ENCODE measurements at regions of chr5 and their contacts with region 1.

Region 1: DNA sequence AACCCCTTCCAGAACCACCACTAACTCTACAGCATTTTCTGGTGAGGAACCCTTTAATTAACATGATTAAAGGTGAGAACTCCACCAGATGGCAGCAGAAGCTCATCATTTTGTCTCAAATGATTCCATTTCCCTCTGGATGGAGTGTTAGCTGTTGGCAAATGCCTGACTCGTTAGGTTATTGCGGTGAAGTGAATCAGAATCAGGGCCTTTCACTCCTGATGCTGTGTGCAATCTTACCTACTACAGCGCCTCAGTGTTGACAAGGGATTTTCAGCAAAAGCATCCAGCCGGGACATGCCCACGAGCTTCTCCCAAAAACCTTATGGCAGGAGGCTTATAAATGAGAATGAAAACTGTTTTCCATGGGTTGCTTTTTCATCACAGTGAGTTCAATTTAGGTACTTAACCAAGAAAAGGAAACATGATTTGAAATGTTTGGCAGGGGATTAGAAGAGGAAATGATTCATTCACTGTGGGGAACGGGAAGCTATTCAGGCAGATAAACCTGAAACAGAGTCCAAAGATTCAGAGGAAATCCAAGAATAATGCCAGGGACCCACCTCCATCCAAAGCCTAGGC is 48.0 kb upstream of the CAST start:
- DNase-seq: peak; percentile 64
- H3K4me3 ChIP-seq: peak overlapping the region; percentile 10 to 58; a peak in 2 of 4 replicates
- H3K27ac ChIP-seq: peak overlapping the region; percentile 17 to 89; a peak in 3 of 4 replicates
- H3K4me1 ChIP-seq: peaks cover 0 to 16% of the 10 kb centered on the region in 2 experiments; a peak in 1 of 4 replicates
- H3K27me3 ChIP-seq: no peaks in the 10 kb centered on the region
- CTCF ChIP-seq: peak; percentile 71
- EP300 ChIP-seq: peak in 1 of 2 experiments; percentile 47; a peak in 1 of 4 replicates
- RAD21 ChIP-seq: peak; percentile 91

Region 2: GRCh38 chr5:96702503-96703383 is 88.5 kb after region 1 on chr5:
- CTCF ChIA-PET with region 1: interaction called, 11 read pairs
- POLR2A ChIA-PET with region 1: no interaction called
- DNase-seq: peak; percentile 92
- H3K4me3 ChIP-seq: peak overlapping the region; percentile 69 to 77
- H3K27ac ChIP-seq: peak overlapping the region; percentile 79 to 89
- H3K4me1 ChIP-seq: peaks cover 9 to 11% of the 10 kb centered on the region in 2 experiments; a peak in 3 of 4 replicates
- H3K27me3 ChIP-seq: no peaks in the 10 kb centered on the region
- CTCF ChIP-seq: no peak
- EP300 ChIP-seq: no peak
- RAD21 ChIP-seq: no peak

Region 3: DNA sequence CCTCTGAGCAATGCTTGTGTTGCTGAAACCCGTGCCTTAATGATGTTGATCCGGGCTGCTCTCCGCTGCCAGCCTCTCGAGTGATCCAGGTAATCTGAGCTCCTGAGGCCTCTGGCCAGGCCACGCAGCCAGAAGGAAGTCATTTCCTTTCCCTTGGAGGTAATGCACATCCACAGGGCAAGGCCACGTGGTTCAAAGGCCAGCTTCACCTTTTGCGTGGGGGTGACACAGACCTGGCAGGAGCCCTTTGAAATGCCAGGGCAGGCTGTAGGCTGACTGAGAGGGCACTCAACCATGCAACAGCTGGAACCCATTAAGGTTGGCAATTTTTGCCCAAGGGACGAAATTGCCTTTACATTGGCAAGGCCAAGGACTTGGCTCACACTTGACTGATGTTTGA is 447.8 kb after region 1 on chr5:
- CTCF ChIA-PET with region 1: no interaction called
- POLR2A ChIA-PET with region 1: no interaction called
- DNase-seq: peak; percentile 17
- H3K4me3 ChIP-seq: no peak overlapping the region
- H3K27ac ChIP-seq: no peak overlapping the region
- H3K4me1 ChIP-seq: peaks cover 0 to 6% of the 10 kb centered on the region in 2 experiments; a peak in 1 of 4 replicates
- H3K27me3 ChIP-seq: no peaks in the 10 kb centered on the region
- CTCF ChIP-seq: no peak
- EP300 ChIP-seq: no peak
- RAD21 ChIP-seq: no peak